Ascending aorta (tissue), 2 donors: ENCODE measurements at regions of chr6 and their contacts with region 1.

Region 1: DNA sequence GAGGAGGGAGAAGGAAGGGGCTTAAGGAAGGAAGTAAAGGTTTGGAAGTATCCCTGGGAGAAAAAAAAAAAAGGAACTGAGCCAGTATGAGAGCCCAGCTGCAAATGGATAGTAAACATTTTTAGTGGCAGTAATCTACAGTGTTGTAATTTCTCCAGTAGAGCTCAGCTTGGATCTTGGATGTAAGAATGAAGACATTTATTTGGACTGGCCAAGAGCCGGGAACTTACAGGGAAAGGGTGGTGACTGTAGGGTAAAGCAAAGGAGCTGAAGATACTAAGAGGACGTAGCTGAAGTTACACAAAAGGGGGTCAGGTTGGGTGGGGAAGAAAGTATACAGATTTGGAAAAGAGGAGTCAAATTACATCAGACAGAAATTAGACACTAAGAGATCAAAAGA is 13.5 kb downstream of the EEF1E1 start:
- DNase-seq: no peak
- H3K4me3 ChIP-seq: no peak overlapping the region
- H3K27ac ChIP-seq: peak overlapping the region; percentile 55 to 58
- H3K4me1 ChIP-seq: peaks cover 0 to 19% of the 10 kb centered on the region in 2 donors
- H3K27me3 ChIP-seq: no peaks in the 10 kb centered on the region
- CTCF ChIP-seq: no peak

Region 2: GRCh38 chr6:8102122-8102958 is 13.5 kb after region 1 on chr6 and contains the start of gene EEF1E1:
- intact Hi-C with region 1: loop called (anchors 2 kb)
- DNase-seq: peak; percentile 84 to 96
- H3K4me3 ChIP-seq: peak within 1 kb of the TSS; percentile 90 to 94
- H3K27ac ChIP-seq: peak within 1 kb of the TSS; percentile 32 to 47
- H3K4me1 ChIP-seq: peaks cover 0 to 9% of the 10 kb centered on the region in 2 donors
- H3K27me3 ChIP-seq: no peaks in the 10 kb centered on the region
- CTCF ChIP-seq: no peak
- total RNA-seq, gene EEF1E1: 15.5 TPM